Activated B cell treated with CpG ODN at 0.5 μM for 24 hours (primary cell): ENCODE measurements at regions of chr10 and their contacts with region 1.

Region 1: DNA sequence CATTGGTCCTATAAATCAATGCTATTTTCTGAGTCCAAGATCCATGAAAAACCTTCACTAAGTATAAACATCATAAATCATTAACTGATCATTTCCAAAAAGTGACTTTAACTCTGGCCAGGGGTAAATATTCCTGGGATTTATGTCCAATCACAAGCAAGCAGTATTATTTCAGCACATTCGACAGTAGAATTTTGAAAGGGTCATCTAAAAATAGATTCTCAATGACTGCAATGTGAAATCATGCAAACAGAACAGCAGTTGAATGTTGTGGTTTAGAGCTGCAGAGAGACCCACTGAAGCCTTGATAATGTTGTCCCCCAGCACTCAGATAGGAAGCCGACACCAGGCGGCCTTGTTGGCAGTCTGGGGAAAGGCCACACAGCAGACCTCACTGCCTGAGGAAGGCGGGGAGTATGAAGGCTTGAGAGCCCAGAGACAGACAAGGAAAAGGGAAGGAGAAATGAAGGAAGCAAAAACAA is 38.1 kb downstream of the FAM107B start:
- DNase-seq: no peak
- ATAC-seq: peak; percentile 76
- H3K4me3 Mint-ChIP-seq: peak overlapping the region; percentile 73
- H3K27ac Mint-ChIP-seq: peak overlapping the region; percentile 98
- H3K4me1 Mint-ChIP-seq: peaks cover 76% of the 10 kb centered on the region
- H3K27me3 Mint-ChIP-seq: no peaks in the 10 kb centered on the region
- CTCF ChIP-seq: no peak

Region 2: DNA sequence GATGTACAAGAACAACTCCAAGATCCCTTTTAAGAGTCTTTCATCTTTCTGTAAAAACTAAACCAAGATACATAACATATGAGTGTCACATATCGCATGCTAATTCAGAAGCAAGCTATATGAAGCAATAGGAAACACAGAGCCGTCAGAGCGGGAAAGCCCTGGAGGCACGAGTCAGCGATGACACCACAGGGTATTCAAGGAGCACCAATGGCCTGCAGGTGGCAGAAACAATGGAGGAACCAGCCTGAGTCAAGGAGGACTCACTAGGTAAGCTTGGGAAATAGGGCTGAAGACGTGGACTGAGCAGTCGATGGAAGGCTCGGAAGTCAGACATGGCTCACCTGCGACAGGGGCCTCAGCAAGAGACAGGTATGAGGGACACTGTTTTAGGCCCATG is 176.4 kb before region 1 on chr10:
- CTCF ChIA-PET with region 1: no interaction called
- POLR2A ChIA-PET with region 1: no interaction called
- intact Hi-C with region 1: no loop called
- DNase-seq: no peak
- ATAC-seq: peak; percentile 42
- H3K4me3 Mint-ChIP-seq: peak overlapping the region; percentile 25
- H3K27ac Mint-ChIP-seq: peak overlapping the region; percentile 72
- H3K4me1 Mint-ChIP-seq: peaks cover 98% of the 10 kb centered on the region
- H3K27me3 Mint-ChIP-seq: no peaks in the 10 kb centered on the region
- CTCF ChIP-seq: no peak

Region 3: DNA sequence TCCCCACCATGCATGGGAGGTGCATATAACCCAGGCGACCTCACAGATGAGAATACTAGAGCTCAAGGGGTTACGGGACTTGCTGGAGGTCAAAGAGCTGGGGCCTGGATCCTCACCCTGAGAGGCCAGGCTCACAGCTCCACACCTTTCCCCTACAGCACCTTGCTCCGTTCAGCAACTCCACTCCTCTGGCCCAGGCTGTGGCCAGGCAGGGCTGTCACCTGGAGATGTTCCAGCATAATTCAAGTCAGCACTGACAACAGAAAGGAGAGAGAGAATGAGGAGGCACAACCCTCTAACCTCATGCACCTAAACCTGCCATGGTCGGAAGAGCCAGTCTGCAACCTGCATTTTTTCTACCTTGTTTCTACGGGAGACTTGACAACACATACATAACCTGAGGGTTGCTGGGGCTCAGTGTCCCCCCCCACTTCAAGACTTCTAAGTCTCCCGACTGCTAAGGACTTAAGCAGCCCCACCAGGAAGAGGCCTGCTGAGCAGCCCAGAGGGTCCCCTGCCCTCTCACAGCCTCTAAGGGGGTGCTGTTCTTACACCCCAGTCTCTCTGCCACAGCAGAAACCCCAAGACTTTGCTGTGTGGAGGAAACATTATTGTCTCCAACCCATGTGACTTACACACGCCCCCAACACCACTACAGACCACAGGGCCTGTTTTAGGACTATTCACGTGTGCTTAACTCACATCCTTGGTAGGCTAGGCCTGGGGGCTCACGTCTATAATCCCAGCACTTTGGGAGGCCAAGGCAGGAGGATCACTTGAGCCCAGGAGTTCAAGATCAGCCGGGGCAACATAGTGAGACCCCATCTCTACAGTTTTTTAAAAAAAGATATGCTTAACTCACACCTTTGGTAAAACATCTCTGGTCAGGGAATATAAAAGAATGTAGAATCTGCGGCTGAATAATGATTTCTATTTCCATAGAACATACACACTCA is 137.6 kb before region 1 on chr10:
- CTCF ChIA-PET with region 1: no interaction called
- POLR2A ChIA-PET with region 1: interaction called, 58 read pairs
- intact Hi-C with region 1: no loop called
- DNase-seq: no peak
- ATAC-seq: no peak
- H3K4me3 Mint-ChIP-seq: peak overlapping the region; percentile 29
- H3K27ac Mint-ChIP-seq: peak overlapping the region; percentile 75
- H3K4me1 Mint-ChIP-seq: peaks cover 76% of the 10 kb centered on the region
- H3K27me3 Mint-ChIP-seq: no peaks in the 10 kb centered on the region
- CTCF ChIP-seq: no peak

Region 4: DNA sequence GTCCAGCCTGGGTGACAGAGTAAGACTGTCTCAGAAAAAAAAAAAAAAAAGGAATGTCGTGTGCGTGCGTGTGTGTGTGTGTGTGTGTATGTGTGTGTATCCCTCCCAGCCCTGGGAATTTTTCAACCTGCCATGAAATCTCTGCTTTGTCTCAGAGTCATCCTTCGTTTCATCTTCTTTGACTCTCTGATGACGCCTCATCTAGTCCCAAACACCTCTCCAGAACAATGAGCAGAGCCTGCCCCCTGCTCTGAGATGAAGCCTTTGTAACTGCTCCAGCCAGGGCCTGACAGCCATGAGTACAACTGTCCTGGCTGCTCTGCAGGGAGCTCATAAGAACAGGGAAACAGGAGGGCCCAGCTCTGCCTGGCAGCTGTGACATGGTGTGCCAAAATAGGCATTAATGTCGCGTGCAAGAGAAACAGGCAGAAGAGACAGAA is 111.4 kb before region 1 on chr10:
- CTCF ChIA-PET with region 1: no interaction called
- POLR2A ChIA-PET with region 1: no interaction called
- intact Hi-C with region 1: no loop called
- DNase-seq: no peak
- ATAC-seq: no peak
- H3K4me3 Mint-ChIP-seq: no peak overlapping the region
- H3K27ac Mint-ChIP-seq: no peak overlapping the region
- H3K4me1 Mint-ChIP-seq: peaks cover 6% of the 10 kb centered on the region
- H3K27me3 Mint-ChIP-seq: no peaks in the 10 kb centered on the region
- CTCF ChIP-seq: no peak

Region 5: DNA sequence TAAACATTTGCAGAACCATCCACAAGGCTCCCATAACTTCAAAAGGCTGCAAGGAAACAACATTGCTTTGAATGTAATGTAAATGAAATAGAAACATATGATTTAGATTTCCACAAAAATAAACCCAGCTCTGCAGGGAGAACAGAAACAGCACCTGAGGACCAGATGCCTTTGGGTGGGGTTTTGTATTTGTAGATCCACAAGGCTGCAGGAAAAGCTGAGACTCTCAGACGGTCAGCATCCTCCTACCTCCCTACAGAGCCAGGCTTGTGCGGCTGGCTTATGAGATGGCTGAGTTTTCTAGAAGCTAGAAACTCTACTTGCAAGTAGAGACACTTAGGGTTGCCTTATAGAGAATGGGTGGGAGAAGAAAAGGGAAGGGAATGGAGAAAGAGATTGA is 11.7 kb before region 1 on chr10:
- CTCF ChIA-PET with region 1: no interaction called
- POLR2A ChIA-PET with region 1: interaction called, 9 read pairs
- intact Hi-C with region 1: loop called (anchors 1 kb)
- DNase-seq: no peak
- ATAC-seq: no peak
- H3K4me3 Mint-ChIP-seq: no peak overlapping the region
- H3K27ac Mint-ChIP-seq: no peak overlapping the region
- H3K4me1 Mint-ChIP-seq: peaks cover 49% of the 10 kb centered on the region
- H3K27me3 Mint-ChIP-seq: no peaks in the 10 kb centered on the region
- CTCF ChIP-seq: no peak